ENCODE measurements at regions of chrX and their contacts with region 1.

Region 1: DNA sequence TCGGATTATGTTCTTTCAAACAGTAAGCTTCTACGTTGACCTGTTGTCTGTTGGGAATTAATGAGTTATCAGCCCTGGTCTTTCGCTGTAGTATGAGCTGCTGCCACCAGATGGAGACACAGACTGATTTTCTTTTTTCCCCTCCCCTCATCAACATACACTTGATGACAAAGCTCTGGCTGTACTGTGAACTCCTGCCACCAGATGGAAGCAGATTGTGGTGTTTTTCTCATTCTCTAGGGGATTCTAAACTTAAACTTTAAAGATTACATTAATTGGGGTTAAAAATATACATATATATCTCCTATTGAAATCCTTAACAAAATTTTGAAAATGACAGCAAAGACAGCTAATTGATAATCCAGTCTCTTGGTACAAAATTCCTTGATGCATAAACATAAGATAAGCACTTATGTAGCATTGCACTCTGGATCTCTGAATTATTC is 44.8 kb downstream of the SMS start:
- DNase-seq: peak; percentile 77
- H3K4me3 Mint-ChIP-seq: no peak overlapping the region
- H3K27ac Mint-ChIP-seq: peak overlapping the region; percentile 45
- H3K4me1 Mint-ChIP-seq: peaks cover 18% of the 10 kb centered on the region
- H3K27me3 Mint-ChIP-seq: no peaks in the 10 kb centered on the region

Region 2: DNA sequence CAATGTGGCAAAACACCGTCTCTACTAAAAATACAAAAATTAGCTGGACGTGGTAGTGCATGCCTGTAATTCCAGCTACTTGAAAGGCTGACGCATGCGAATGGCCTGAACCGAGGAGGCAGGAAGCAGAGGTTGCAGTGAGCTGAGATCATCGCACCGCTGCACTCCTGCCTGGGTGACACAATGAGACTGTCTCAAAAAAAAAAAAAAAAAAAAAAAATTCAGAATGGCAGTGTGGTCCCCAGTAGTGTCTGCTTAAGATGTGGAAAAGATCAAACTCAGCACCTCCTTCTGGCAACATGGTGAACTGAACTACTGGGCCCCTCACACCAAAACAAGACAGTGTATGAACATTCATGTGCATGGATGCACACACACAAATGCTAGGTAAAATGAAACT is 12.6 kb before region 1 on chrX:
- CTCF ChIA-PET with region 1: interaction called, 31 read pairs
- POLR2A ChIA-PET with region 1: no interaction called
- intact Hi-C with region 1: no loop called
- DNase-seq: peak; percentile 64
- H3K4me3 Mint-ChIP-seq: no peak overlapping the region
- H3K27ac Mint-ChIP-seq: peak overlapping the region; percentile 87
- H3K4me1 Mint-ChIP-seq: peaks cover 35% of the 10 kb centered on the region
- H3K27me3 Mint-ChIP-seq: no peaks in the 10 kb centered on the region

Region 3: GRCh38 chrX:22063284-22063683 is 77.9 kb after region 1 on chrX:
- CTCF ChIA-PET with region 1: interaction called, 6 read pairs
- POLR2A ChIA-PET with region 1: no interaction called
- intact Hi-C with region 1: loop called (anchors 1 kb)
- DNase-seq: peak; percentile 47
- H3K4me3 Mint-ChIP-seq: no peak overlapping the region
- H3K27ac Mint-ChIP-seq: peak overlapping the region; percentile 38
- H3K4me1 Mint-ChIP-seq: peaks cover 59% of the 10 kb centered on the region
- H3K27me3 Mint-ChIP-seq: no peaks in the 10 kb centered on the region

Region 4: DNA sequence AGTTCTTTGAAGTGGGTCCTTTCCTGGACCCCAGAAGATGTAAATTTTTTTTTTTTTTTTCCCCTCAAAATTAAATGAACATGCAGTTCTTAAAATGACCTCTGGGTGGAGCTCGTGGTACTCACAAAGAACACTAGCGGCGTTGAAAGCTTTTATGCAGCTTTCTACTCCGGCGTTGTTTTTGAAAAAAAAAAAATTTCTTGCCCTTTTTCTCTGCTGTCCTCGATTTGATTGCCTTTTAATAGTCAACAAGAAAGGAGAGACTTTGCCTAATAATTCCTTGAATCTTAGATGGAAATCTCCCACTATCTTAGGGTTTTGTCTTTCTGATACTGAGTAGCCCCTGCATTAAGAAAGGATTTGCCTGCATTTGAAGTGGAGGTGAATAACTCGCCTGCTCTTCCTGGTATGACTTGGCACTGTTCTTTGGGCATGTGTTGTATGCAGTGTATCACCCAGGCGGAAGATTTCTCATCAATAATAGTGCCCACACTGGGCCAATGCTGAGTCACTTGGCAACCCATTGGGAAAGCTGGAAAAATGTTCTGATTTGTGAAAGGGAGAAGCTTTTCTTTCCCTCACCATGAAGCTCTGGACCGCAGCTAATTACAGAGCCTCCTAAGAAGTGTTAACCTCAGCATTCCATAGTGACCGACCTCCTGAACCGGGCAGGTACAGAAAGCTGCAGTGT is 150.8 kb after region 1 on chrX:
- CTCF ChIA-PET with region 1: interaction called, 40 read pairs
- POLR2A ChIA-PET with region 1: interaction called, 3 read pairs
- intact Hi-C with region 1: loop called (anchors 1 kb)
- DNase-seq: no peak
- H3K4me3 Mint-ChIP-seq: no peak overlapping the region
- H3K27ac Mint-ChIP-seq: no peak overlapping the region
- H3K4me1 Mint-ChIP-seq: peaks cover 14% of the 10 kb centered on the region
- H3K27me3 Mint-ChIP-seq: no peaks in the 10 kb centered on the region

Region 5: GRCh38 chrX:22748093-22748999 is 763.0 kb after region 1 on chrX:
- CTCF ChIA-PET with region 1: interaction called, 19 read pairs
- POLR2A ChIA-PET with region 1: no interaction called
- intact Hi-C with region 1: loop called (anchors 1 kb)
- DNase-seq: peak; percentile 32
- H3K4me3 Mint-ChIP-seq: no peak overlapping the region
- H3K27ac Mint-ChIP-seq: no peak overlapping the region
- H3K4me1 Mint-ChIP-seq: no peaks in the 10 kb centered on the region
- H3K27me3 Mint-ChIP-seq: no peaks in the 10 kb centered on the region

Measured in activated CD4-positive, alpha-beta memory T cell treated with anti-CD3 and anti-CD28 coated beads for 36 hours (primary cell).